ENCODE measurements at regions of chr10 and their contacts with region 1.

Region 1: DNA sequence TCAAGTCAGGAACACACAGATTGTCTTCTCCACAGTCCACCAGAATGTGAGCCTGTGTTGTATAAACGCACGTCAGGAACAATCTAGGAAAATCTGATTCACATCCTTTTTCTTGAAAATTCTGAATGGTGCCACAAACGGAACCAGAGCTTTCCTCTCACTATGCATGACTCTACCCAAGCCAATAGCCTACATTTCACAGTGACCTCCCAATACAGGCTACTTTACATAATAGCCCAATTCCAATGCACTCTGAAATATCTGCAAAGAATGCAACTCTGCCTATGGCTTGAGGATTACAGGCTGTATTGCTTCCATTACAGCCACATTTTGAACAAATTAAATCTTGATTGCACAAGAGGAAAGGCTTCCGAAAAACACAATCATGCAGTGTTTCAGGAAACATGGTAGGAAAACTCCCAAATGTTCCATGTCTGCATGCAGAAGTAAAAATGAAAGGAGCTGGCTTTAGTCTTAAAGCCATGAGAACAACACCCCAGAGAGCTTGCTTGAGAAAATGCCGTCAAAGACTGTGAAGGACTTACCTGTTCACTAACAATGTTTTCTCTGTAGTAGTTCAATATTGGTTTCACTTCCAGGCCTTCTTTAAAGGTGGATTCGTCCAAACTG is 113.9 kb downstream of the ITGA8 start:
- DNase-seq: no peak
- ATAC-seq: no peak
- H3K4me3 ChIP-seq: no peak overlapping the region
- H3K4me3 Mint-ChIP-seq: no peak overlapping the region
- H3K27ac ChIP-seq: no peak overlapping the region
- H3K27ac Mint-ChIP-seq: no peak overlapping the region
- H3K4me1 ChIP-seq: no peaks in the 10 kb centered on the region
- H3K4me1 Mint-ChIP-seq: no peaks in the 10 kb centered on the region
- H3K27me3 ChIP-seq: no peaks in the 10 kb centered on the region
- H3K27me3 Mint-ChIP-seq: peaks cover 3% of the 10 kb centered on the region
- CTCF ChIP-seq: no peak

Region 2: GRCh38 chr10:15725603-15726002 is 119.7 kb after region 1 on chr10:
- CTCF ChIA-PET with region 1: no interaction called
- POLR2A ChIA-PET with region 1: interaction called, 13 read pairs
- intact Hi-C with region 1: no loop called
- DNase-seq: no peak
- ATAC-seq: no peak
- H3K4me3 ChIP-seq: no peak overlapping the region
- H3K4me3 Mint-ChIP-seq: no peak overlapping the region
- H3K27ac ChIP-seq: no peak overlapping the region
- H3K27ac Mint-ChIP-seq: no peak overlapping the region
- H3K4me1 ChIP-seq: no peaks in the 10 kb centered on the region
- H3K4me1 Mint-ChIP-seq: no peaks in the 10 kb centered on the region
- H3K27me3 ChIP-seq: peaks cover 0 to 9% (median 4%) of the 10 kb centered on the region in 4 experiments
- H3K27me3 Mint-ChIP-seq: peaks cover 25% of the 10 kb centered on the region
- CTCF ChIP-seq: no peak